Upper lobe of right lung (tissue), 1 donor: ENCODE measurements at regions of chr11 and their contacts with region 1.

Region 1: DNA sequence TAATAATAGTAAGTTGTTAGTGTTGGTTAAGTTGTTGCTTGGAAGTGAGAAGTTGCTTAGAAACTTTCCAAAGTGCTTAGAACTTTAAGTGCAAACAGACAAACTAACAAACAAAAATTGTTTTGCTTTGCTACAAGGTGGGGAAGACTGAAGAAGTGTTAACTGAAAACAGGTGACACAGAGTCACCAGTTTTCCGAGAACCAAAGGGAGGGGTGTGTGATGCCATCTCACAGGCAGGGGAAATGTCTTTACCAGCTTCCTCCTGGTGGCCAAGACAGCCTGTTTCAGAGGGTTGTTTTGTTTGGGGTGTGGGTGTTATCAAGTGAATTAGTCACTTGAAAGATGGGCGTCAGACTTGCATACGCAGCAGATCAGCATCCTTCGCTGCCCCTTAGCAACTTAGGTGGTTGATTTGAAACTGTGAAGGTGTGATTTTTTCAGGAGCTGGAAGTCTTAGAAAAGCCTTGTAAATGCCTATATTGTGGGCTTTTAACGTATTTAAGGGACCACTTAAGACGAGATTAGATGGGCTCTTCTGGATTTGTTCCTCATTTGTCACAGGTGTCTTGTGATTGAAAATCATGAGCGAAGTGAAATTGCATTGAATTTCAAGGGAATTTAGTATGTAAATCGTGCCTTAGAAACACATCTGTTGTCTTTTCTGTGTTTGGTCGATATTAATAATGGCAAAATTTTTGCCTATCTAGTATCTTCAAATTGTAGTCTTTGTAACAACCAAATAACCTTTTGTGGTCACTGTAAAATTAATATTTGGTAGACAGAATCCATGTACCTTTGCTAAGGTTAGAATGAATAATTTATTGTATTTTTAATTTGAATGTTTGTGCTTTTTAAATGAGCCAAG is 2.7 kb downstream of the NEAT1 start:
- DNase-seq: peak; percentile 53
- ATAC-seq: no peak
- H3K4me3 ChIP-seq: peak overlapping the region; percentile 98
- H3K27ac ChIP-seq: peak overlapping the region; percentile 100
- H3K4me1 ChIP-seq: peaks cover 29% of the 10 kb centered on the region
- H3K27me3 ChIP-seq: no peaks in the 10 kb centered on the region
- CTCF ChIP-seq: no peak

Region 2: GRCh38 chr11:65500387-65501185 is 75.2 kb after region 1 on chr11:
- intact Hi-C with region 1: loop called (anchors 5 kb)
- DNase-seq: peak; percentile 70
- ATAC-seq: no peak
- H3K4me3 ChIP-seq: peak overlapping the region; percentile 79
- H3K27ac ChIP-seq: peak overlapping the region; percentile 100
- H3K4me1 ChIP-seq: peaks cover 24% of the 10 kb centered on the region
- H3K27me3 ChIP-seq: no peaks in the 10 kb centered on the region
- CTCF ChIP-seq: no peak